Activated CD8-positive, alpha-beta T cell treated with anti-CD3 and anti-CD28 coated beads, Interleukin-2, amount 10 ng/mL, durations not matched to agents 7 days and 5 days (primary cell): ENCODE measurements at regions of chr18 and their contacts with region 1.

Region 1: GRCh38 chr18:48445540-48445939 is 36.4 kb upstream of the ZBTB7C start:
- DNase-seq: peak; percentile 81
- ATAC-seq: peak; percentile 81
- H3K4me3 Mint-ChIP-seq: no peak overlapping the region
- H3K27ac Mint-ChIP-seq: no peak overlapping the region
- H3K4me1 Mint-ChIP-seq: peaks cover 6% of the 10 kb centered on the region
- H3K27me3 Mint-ChIP-seq: peaks cover 37% of the 10 kb centered on the region

Region 2: DNA sequence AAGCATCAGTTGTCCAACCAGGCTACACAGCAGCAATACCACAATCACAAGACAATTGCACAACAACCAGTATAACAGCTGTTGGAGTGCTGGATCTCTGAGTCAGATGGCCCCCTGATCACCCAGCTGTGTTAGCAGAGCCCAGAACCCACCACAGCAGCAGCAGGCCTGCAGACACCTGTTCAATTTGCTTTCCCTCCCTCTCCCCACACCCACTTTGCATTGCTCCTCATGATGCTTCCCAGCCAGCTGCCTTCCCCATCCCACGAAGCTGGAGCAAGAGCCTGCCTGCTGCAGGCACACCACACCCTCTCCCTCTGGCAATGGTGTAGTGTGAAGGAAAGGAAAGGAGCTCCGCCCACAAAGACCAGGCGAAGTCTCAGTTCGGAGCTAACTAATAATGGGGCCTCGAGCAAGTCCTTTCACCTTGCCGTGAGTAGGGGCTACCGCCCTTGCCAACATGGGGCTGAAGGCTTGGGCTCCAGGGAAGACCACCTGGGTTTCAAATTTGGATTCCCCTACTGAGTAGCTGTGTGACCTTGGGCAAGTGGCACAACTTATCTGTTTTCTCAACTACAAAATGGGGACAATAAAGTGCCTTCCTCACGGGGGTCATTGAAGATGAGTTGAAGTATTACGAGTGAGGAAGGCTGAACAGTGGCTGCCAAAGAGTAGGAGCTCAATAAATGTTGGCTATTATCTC is 16.9 kb before region 1 on chr18:
- CTCF ChIA-PET with region 1: interaction called, 10 read pairs
- POLR2A ChIA-PET with region 1: no interaction called
- DNase-seq: no peak
- ATAC-seq: no peak
- H3K4me3 Mint-ChIP-seq: no peak overlapping the region
- H3K27ac Mint-ChIP-seq: no peak overlapping the region
- H3K4me1 Mint-ChIP-seq: no peaks in the 10 kb centered on the region
- H3K27me3 Mint-ChIP-seq: peaks cover 48% of the 10 kb centered on the region

Region 3: DNA sequence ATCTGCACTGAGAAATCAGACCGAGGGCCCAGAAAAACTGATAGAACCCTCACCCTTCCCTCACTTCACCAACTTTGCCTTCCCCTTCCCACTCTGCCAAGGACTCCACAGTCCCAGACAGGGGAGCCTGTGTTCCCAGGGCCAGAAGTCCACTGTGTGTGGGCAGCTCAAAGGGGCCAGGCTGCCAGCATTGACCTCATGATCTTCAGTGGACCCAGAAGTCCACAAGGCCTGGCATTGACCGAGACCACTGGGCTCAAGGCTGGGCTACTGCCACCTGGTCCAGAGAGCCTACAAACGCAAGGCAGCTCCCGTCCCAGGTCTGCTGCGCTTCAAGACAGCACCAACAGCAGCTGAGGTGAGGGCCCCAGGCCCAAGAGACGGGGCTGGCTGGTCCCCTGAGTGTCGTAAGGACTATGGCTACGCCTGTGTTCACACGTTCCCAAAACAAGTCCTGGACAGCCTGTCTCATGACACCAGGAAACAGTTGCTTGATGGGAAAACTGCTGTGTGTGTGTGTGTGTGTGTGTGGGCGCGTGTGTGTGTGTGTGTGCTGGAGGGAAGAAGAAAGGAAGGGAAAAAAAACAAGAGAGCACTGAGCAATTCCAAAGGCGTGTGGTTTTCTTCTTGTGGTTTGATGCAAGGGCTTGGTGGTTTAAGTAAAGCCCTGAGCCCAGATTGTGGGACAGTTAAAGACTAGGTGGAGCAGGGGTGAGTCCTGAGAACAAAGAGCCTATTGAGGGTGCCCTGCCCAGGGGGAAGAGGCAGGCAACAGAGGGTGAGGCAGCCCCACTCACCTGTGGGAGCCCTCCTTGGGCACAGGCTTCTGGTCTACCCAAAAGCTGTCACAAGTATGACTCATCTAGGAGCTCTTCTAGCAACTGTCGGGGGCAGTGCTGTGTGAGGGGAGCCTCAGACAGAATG is 10.3 kb after region 1 on chr18:
- CTCF ChIA-PET with region 1: interaction called, 24 read pairs
- POLR2A ChIA-PET with region 1: no interaction called
- DNase-seq: peak; percentile 58
- ATAC-seq: peak; percentile 77
- H3K4me3 Mint-ChIP-seq: no peak overlapping the region
- H3K27ac Mint-ChIP-seq: no peak overlapping the region
- H3K4me1 Mint-ChIP-seq: peaks cover 20% of the 10 kb centered on the region
- H3K27me3 Mint-ChIP-seq: peaks cover 30% of the 10 kb centered on the region